Activated CD8-positive, alpha-beta T cell treated with anti-CD3 and anti-CD28 coated beads, Interleukin-2, amount 10 ng/mL, durations not matched to agents 7 days and 5 days (primary cell): ENCODE measurements at regions of chr12 and their contacts with region 1.

Region 1: DNA sequence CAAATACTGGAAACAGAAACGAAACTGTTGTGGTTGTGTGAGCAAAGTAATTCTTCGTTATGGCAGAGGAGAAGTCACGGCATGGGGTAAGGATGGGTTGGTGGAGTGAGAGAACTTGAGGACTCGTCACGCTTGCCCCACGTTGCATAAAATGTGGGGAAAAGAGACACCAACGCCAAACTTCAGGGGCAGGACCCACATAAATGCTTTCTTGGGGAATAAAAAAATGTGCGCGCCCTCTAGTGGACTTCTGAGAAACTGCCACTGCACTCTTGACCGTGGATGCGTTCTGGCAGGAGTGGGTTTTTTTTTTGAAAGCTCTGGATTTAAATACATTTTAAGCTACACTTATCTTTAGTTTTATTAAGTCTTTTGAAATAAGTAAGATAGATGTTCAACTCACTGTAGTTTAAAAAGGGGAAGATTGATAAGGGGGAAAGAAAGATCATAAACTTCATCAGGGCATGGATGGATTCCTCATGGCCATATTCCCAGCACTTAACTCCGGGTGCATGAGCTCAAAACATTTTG is 4.1 kb upstream of the IGF1 start:
- DNase-seq: peak; percentile 73
- ATAC-seq: peak; percentile 85
- H3K4me3 Mint-ChIP-seq: peak overlapping the region; percentile 61
- H3K27ac Mint-ChIP-seq: peak overlapping the region; percentile 84
- H3K4me1 Mint-ChIP-seq: peaks cover 29% of the 10 kb centered on the region
- H3K27me3 Mint-ChIP-seq: peaks cover 2% of the 10 kb centered on the region

Region 2: DNA sequence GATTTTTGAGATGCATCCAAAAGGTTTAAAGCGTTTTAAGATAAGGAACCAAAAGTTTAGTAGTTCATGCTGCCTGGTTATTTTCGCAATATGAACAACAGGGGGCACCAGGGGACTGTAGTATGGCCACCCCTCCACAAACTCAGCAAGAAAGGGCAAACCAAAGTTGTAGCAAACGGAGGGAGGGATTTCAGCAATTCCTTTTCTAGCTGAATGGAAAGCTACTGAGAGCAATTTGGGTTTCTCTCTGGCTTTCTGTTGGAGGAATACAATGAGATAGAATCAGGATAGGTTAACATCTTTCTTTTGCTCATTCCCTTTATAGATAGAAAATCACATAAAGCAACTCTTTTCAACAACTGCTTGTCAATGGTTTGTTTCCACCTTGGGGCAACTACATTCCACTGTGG is 544.6 kb before region 1 on chr12:
- CTCF ChIA-PET with region 1: interaction called, 20 read pairs
- POLR2A ChIA-PET with region 1: no interaction called
- DNase-seq: peak; percentile 75
- ATAC-seq: peak; percentile 74
- H3K4me3 Mint-ChIP-seq: no peak overlapping the region
- H3K27ac Mint-ChIP-seq: no peak overlapping the region
- H3K4me1 Mint-ChIP-seq: peaks cover 2% of the 10 kb centered on the region
- H3K27me3 Mint-ChIP-seq: peaks cover 37% of the 10 kb centered on the region

Region 3: GRCh38 chr12:102169922-102170621 is 314.4 kb before region 1 on chr12:
- CTCF ChIA-PET with region 1: interaction called, 17 read pairs
- POLR2A ChIA-PET with region 1: no interaction called
- DNase-seq: peak; percentile 34
- ATAC-seq: peak; percentile 58
- H3K4me3 Mint-ChIP-seq: no peak overlapping the region
- H3K27ac Mint-ChIP-seq: no peak overlapping the region
- H3K4me1 Mint-ChIP-seq: no peaks in the 10 kb centered on the region
- H3K27me3 Mint-ChIP-seq: no peaks in the 10 kb centered on the region

Region 4: DNA sequence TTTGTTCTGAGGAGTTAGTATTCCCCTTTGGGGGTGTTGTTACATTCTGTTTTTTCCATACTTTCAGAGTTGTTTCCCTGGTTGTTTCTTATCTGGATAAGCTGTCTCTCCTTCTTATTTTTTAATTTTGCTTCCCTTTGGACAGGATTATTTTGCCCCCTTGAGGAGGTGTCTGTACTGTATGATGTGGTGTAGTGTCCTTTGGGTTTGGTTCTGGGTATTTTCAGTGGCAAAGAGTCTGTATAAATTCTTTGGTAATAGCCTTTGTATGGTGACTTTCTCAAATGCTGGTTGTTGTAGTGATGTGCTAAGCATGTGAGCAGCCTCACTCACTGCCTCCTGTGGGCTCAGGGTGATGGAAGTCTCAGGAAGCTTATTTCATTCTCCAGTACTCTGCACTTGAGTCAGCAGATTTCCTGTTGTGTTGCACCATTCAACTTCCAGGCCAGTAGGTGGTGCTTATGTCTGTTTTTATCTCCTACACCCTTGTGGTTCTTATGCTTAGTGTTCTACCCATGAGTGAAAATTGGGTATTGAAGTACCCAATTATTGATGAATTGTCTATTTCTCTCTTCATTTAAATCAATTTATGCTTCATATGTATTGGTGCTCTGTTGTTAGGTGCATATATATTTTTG is 183.6 kb before region 1 on chr12:
- CTCF ChIA-PET with region 1: interaction called, 11 read pairs
- POLR2A ChIA-PET with region 1: no interaction called
- DNase-seq: peak; percentile 46
- ATAC-seq: peak; percentile 81
- H3K4me3 Mint-ChIP-seq: no peak overlapping the region
- H3K27ac Mint-ChIP-seq: no peak overlapping the region
- H3K4me1 Mint-ChIP-seq: peaks cover 5% of the 10 kb centered on the region
- H3K27me3 Mint-ChIP-seq: peaks cover 14% of the 10 kb centered on the region

Region 5: DNA sequence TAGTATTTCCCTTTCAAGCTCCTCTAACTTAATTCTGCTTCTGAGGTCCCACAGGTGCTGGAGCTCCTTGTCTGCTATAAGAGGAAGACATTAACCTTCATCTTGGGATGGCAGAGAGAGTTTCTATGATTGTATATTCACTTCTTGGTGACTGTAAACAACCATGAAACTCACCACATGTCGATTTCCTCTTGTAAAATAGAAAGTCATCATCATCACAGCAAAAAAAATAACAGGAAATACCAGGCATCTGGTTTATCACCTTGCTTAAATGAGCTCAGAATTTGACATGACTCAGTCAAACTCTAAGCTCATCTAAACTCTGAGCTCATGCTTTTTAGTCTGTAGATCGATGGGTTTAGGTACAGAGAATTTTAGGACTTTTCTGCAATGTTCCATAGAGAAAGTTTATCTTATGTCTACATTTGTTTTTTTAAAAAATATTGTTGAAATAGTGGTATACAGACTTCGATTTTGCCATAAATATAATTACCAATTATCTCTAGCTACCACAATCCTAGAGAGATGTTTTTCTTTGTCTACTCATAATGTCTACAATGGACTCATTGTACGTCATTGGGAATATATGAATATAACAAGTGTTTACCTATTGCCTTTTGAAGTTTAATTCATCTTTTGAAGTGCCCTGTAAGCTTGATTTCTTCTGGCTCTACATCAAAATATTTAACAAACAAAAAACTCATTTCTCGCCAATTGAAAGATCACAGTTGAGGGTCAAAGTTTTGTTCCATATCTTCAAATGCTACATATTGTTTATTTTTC is 62.5 kb before region 1 on chr12:
- CTCF ChIA-PET with region 1: interaction called, 10 read pairs
- POLR2A ChIA-PET with region 1: interaction called, 3 read pairs
- DNase-seq: no peak
- ATAC-seq: peak; percentile 57
- H3K4me3 Mint-ChIP-seq: no peak overlapping the region
- H3K27ac Mint-ChIP-seq: peak overlapping the region; percentile 74
- H3K4me1 Mint-ChIP-seq: peaks cover 16% of the 10 kb centered on the region
- H3K27me3 Mint-ChIP-seq: peaks cover 3% of the 10 kb centered on the region

Region 6: DNA sequence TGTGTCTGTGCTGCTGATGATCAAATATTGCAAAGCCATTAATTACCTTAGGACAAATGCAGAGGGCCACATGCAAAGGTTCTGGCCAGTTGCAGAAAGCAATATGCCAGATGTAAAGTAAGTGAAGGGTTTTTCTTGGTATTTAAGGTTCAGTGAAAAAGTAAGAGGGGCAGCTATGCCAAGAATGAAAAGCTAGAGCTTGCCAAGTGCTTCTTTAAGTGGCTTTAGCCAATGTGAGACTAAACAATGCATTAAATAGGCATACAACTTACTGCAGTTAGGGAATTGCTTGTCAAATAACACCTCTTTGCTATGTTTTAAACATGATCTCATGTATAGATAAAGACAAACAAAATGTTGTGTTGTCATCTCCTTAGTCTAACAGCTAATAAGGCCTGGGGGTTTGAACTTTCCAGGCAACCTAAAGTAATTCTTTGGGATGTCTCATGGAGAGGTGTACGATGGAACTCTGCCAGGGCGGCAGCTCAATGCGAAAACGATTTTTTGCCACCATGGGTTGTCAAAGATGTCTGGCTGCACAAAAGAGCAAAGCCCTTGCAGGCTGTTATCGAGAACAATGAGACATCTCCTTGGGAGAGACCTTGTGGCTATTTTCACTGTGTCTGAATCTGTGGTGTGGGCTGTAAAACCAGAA is 16.1 kb before region 1 on chr12:
- CTCF ChIA-PET with region 1: interaction called, 23 read pairs
- POLR2A ChIA-PET with region 1: no interaction called
- DNase-seq: no peak
- ATAC-seq: no peak
- H3K4me3 Mint-ChIP-seq: no peak overlapping the region
- H3K27ac Mint-ChIP-seq: no peak overlapping the region
- H3K4me1 Mint-ChIP-seq: no peaks in the 10 kb centered on the region
- H3K27me3 Mint-ChIP-seq: peaks cover 8% of the 10 kb centered on the region

Region 7: DNA sequence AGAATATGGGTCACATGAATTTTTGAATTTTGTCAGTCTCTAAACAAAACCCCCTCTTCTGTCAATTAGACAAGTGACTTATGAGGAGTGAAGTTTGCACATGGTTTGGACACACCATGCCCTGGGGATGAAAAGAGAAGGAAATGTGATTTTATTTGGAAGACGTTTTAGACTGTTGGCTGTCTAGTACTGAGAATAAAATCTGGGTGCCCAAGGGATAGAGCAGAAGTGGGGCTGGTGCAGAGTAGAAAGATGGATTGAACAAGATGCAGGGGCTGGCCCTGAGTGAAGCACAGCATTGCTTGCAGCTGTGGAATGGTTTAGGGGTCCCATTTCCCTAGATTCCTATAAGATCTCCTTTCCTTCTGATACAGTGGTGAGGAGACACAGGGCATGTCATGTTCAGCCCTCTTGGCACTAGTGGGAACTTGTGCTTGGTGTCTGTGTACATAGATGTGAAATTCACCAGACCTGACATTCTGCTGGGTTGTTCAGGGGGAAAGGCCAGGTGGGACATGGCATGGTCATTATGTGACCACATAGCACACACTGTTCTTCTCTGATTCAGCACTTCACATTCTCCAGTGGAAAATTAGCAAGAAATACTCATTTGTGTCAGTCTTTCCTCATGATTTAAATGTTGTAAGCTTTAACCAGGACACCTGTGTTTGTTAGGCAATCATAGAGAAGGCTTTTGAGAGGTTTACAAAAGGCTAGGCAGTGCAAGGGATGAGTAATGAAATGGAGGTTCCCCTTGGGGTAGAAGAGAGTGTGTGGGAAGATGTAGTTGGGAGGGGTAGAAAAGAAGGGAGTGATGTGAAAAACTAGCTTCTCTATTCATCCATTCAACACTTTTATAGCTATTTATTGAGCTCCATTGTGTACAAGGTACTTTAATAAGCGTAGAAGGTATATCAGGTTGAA is 198.1 kb after region 1 on chr12:
- CTCF ChIA-PET with region 1: no interaction called
- POLR2A ChIA-PET with region 1: no interaction called
- DNase-seq: no peak
- ATAC-seq: no peak
- H3K4me3 Mint-ChIP-seq: no peak overlapping the region
- H3K27ac Mint-ChIP-seq: no peak overlapping the region
- H3K4me1 Mint-ChIP-seq: no peaks in the 10 kb centered on the region
- H3K27me3 Mint-ChIP-seq: no peaks in the 10 kb centered on the region